ENCODE measurements at regions of chr11 and their contacts with region 1.

Region 1: GRCh38 chr11:78564490-78565467 is 9.9 kb downstream of the NARS2 start:
- DNase-seq: no peak
- H3K4me3 ChIP-seq: no peak overlapping the region
- H3K27ac ChIP-seq: no peak overlapping the region
- H3K4me1 ChIP-seq: no peaks in the 10 kb centered on the region
- H3K27me3 ChIP-seq: no peaks in the 10 kb centered on the region
- CTCF ChIP-seq: peak in 2 of 3 experiments; percentile 28 to 46; a peak in 2 of 4 replicates
- EP300 ChIP-seq: no peak
- POLR2A ChIP-seq: no peak
- RAD21 ChIP-seq: peak; percentile 62 to 78

Region 2: DNA sequence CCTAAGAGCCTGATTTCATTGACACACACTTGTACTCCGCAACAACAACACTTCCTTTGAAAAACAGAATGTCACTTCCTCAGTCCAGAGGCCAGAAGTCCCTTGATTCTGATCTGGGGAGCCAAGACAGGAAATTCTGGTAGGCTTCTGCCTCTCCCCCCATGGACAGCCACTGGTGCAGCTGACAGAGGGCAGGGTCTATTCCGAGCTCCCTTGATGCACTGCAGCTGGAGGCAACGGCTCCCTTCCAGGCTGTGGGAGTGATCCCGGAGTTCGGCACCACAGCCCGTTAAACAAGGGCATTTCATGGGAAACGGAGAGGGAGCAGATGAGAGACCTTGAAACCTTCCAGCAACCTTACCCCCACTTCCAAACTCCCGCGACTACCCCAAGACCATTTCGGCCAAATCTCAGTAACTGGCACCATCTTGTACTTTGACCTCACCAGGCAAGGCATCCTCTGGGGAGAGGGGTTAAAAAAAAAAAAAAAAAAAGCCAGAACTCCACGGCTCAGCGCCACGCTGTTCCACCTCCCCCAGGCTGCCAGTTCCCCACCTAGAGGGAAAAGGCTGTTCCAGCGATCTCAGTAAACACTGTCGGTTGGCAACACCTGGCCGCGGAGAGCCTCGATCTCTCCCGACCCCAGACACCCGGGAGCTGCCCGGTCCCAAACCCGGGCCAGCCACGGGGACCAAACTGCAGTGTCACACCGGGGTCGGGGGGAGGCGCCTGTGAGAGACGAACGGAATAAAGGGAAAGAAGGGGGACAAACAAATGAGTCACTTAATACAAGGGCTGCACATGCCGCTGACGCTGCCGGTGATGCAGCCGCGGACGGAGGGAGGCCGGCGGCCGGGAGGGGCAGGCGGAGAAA is 148.2 kb before region 1 on chr11:
- CTCF ChIA-PET with region 1: interaction called, 36 read pairs
- POLR2A ChIA-PET with region 1: interaction called, 7 read pairs
- DNase-seq: peak; percentile 50 to 91
- H3K4me3 ChIP-seq: peak overlapping the region; percentile 56 to 72 (median 60)
- H3K27ac ChIP-seq: no peak overlapping the region
- H3K4me1 ChIP-seq: peaks cover 3 to 16% (median 5%) of the 10 kb centered on the region in 4 experiments; a peak in 6 of 7 replicates
- H3K27me3 ChIP-seq: peaks cover 0 to 13% (median 8%) of the 10 kb centered on the region in 4 experiments; a peak in 4 of 7 replicates
- CTCF ChIP-seq: peak; percentile 51 to 55 (median 55)
- EP300 ChIP-seq: no peak
- POLR2A ChIP-seq: no peak; a peak in 2 of 3 replicates
- RAD21 ChIP-seq: peak; percentile 37 to 59; a peak in 3 of 4 replicates

Region 3: DNA sequence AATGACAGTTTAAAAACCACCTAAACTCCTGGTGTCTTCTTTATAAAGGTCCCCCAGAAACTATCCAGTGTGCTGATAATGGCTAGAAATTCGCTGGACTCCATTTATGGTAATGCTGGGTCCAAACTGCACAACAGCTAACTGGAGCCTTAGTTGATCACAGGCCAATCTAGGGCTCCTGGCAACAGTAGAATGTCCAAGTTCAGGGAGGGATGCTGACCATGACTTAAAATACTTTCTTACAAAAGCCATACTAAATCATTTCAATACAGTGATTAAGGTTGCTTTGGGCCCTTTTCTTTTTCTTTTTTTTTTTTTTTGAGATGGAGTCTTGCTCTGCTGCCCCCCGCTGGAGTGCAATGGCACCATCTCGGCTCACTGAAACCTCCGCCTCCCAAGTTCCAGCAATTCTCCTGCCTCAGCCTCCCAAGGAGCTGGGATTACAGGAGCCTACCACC is 132.7 kb before region 1 on chr11:
- CTCF ChIA-PET with region 1: interaction called, 28 read pairs
- POLR2A ChIA-PET with region 1: no interaction called
- DNase-seq: no peak
- H3K4me3 ChIP-seq: no peak overlapping the region
- H3K27ac ChIP-seq: no peak overlapping the region
- H3K4me1 ChIP-seq: peaks cover 0 to 3% (median 1%) of the 10 kb centered on the region in 4 experiments; a peak in 2 of 7 replicates
- H3K27me3 ChIP-seq: no peaks in the 10 kb centered on the region
- CTCF ChIP-seq: peak; percentile 30 to 45 (median 33); a peak in 3 of 4 replicates
- EP300 ChIP-seq: 0 out of 3 replicates have a peak, but pooled peaks of 1 of the 2 experiments have one; percentile 4
- POLR2A ChIP-seq: no peak
- RAD21 ChIP-seq: peak; percentile 31 to 42; a peak in 2 of 4 replicates

Region 4: GRCh38 chr11:78548911-78549590 is 15.7 kb before region 1 on chr11:
- CTCF ChIA-PET with region 1: interaction called, 34 read pairs
- POLR2A ChIA-PET with region 1: interaction called, 4 read pairs
- DNase-seq: no peak
- H3K4me3 ChIP-seq: peak overlapping the region in 1 of 4 experiments; percentile 33; a peak in 1 of 8 replicates
- H3K27ac ChIP-seq: no peak overlapping the region
- H3K4me1 ChIP-seq: peaks cover 6 to 15% (median 12%) of the 10 kb centered on the region in 4 experiments
- H3K27me3 ChIP-seq: no peaks in the 10 kb centered on the region
- CTCF ChIP-seq: no peak
- EP300 ChIP-seq: no peak
- POLR2A ChIP-seq: no peak
- RAD21 ChIP-seq: no peak

Region 5: DNA sequence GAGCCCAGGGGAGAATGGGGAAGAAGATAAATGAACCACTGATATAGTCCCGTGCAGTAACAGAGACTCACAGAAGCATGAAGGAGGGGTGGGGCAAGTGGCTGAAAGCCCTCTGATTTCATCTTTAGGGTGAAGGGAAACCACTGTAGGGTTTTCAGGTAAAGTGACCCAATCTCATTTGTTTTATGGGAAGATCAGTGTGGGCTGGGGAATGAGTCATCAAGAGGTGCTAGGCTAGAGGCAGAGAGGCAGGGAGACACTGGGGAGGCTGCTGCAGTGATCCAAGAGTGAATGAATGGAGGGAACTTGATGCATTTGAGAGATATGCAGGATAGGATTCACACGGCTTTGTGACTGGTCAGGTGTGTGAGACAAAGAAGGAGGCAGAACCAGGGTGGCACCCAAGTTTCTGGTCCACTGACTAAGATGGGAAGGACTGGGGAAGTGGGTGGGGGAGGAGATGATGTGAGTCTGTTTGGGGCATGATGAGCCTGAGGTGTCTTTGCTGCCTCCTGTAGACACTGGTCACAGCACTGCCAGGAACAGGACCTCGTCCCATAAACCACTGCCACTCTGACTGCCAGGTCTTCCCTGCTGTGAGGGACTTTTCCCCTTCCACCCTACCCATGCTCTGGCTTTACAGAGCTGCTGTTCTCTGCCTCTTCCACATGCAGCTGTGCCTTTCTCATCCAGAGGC is 637.0 kb after region 1 on chr11:
- CTCF ChIA-PET with region 1: no interaction called
- POLR2A ChIA-PET with region 1: no interaction called
- DNase-seq: no peak
- H3K4me3 ChIP-seq: no peak overlapping the region
- H3K27ac ChIP-seq: no peak overlapping the region
- H3K4me1 ChIP-seq: no peaks in the 10 kb centered on the region
- H3K27me3 ChIP-seq: no peaks in the 10 kb centered on the region
- CTCF ChIP-seq: no peak
- EP300 ChIP-seq: no peak
- POLR2A ChIP-seq: no peak
- RAD21 ChIP-seq: no peak